K562 (cell line): ENCODE measurements at regions of chr1 and their contacts with region 1.

Region 1: GRCh38 chr1:39646232-39647081 is 7.0 kb upstream of the HEYL start:
- DNase-seq: peak; percentile 39 to 62 (median 50)
- ATAC-seq: peak; percentile 75
- H3K4me3 ChIP-seq: no peak overlapping the region
- H3K27ac ChIP-seq: no peak overlapping the region
- H3K4me1 ChIP-seq: peaks cover 5 to 8% of the 10 kb centered on the region in 2 experiments; a peak in 3 of 5 replicates
- H3K27me3 ChIP-seq: peaks cover 9 to 37% of the 10 kb centered on the region in 2 experiments; a peak in 4 of 5 replicates
- CTCF ChIP-seq: no peak
- EP300 ChIP-seq: no peak
- POLR2A ChIP-seq: no peak
- RAD21 ChIP-seq: no peak

Region 2: GRCh38 chr1:39142401-39143151 is 503.9 kb before region 1 on chr1:
- CTCF ChIA-PET with region 1: no interaction called
- POLR2A ChIA-PET with region 1: no interaction called
- in situ Hi-C with region 1: no loop called
- intact Hi-C with region 1: no loop called
- DNase-seq: no peak
- ATAC-seq: no peak
- H3K4me3 ChIP-seq: no peak overlapping the region
- H3K27ac ChIP-seq: no peak overlapping the region
- H3K4me1 ChIP-seq: no peaks in the 10 kb centered on the region; a peak in 2 of 5 replicates
- H3K27me3 ChIP-seq: no peaks in the 10 kb centered on the region
- CTCF ChIP-seq: no peak
- EP300 ChIP-seq: no peak
- POLR2A ChIP-seq: no peak
- RAD21 ChIP-seq: no peak

Region 3: GRCh38 chr1:39615086-39615673 is 31.3 kb before region 1 on chr1:
- CTCF ChIA-PET with region 1: no interaction called
- POLR2A ChIA-PET with region 1: no interaction called
- in situ Hi-C with region 1: no loop called
- intact Hi-C with region 1: no loop called
- DNase-seq: no peak
- ATAC-seq: peak; percentile 43; the same call in 1 of the 3 replicates
- H3K4me3 ChIP-seq: no peak overlapping the region
- H3K27ac ChIP-seq: no peak overlapping the region
- H3K4me1 ChIP-seq: peaks cover 2% of the 10 kb centered on the region in 2 experiments; a peak in 3 of 5 replicates
- H3K27me3 ChIP-seq: peaks cover 3 to 19% of the 10 kb centered on the region in 2 experiments; a peak in 3 of 5 replicates
- CTCF ChIP-seq: no peak
- EP300 ChIP-seq: peak; percentile 52
- POLR2A ChIP-seq: no peak
- RAD21 ChIP-seq: no peak

Region 4: DNA sequence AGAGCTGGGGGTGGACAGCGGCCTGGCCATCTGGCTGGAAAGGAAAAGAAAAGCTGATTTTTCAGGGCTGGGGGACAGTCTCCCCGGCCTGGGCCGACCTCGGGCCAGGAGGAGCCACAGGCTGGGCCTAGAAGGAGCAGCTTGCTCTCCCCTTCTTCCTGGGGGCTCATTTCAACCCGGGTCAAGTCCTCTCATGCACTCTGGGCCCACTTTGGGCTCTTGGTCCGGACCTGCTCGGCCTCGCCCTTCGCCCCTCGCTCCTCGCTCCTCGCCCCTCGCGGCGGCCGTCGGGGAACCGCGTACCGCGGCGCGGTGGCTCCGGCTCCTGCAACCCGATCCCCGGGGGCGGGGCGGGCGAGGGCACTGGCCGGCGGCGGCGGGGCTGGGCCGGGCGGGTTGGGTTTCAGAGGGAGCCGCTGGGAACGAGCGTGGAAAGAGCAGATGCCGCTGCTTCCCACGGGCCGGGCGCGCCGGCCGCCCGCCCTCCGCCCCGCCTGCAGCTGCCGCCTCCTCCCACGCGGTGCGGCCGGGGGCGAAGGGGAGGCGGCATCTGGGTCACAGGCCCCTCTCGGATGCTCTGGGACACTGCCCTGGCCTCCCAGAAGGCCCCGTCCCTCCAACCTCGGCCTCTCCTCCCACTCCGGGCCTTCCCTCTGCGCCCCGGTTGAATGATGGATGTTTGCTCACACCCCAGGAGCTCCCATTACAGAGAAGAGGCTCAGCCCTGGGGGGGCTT is 13.6 kb before region 1 on chr1:
- CTCF ChIA-PET with region 1: no interaction called
- POLR2A ChIA-PET with region 1: interaction called, 12 read pairs
- in situ Hi-C with region 1: no loop called
- intact Hi-C with region 1: no loop called
- DNase-seq: peak; percentile 37 to 81 (median 68)
- ATAC-seq: peak; percentile 70
- H3K4me3 ChIP-seq: no peak overlapping the region
- H3K27ac ChIP-seq: no peak overlapping the region
- H3K4me1 ChIP-seq: peaks cover 3 to 9% of the 10 kb centered on the region in 2 experiments; a peak in 3 of 5 replicates
- H3K27me3 ChIP-seq: peaks cover 52 to 75% of the 10 kb centered on the region in 2 experiments
- CTCF ChIP-seq: no peak
- EP300 ChIP-seq: no peak
- POLR2A ChIP-seq: no peak
- RAD21 ChIP-seq: no peak